WTC11 (cell line): ENCODE measurements at regions of chr14 and their contacts with region 1.

Region 1: GRCh38 chr14:91177073-91178034 is 63.5 kb downstream of the DGLUCY start:
- DNase-seq: peak; percentile 41
- ATAC-seq: peak; percentile 61
- H3K4me3 Mint-ChIP-seq: no peak overlapping the region
- H3K27ac Mint-ChIP-seq: no peak overlapping the region; the same call in 1 of the 2 replicates
- H3K4me1 Mint-ChIP-seq: no peaks in the 10 kb centered on the region
- H3K27me3 Mint-ChIP-seq: no peaks in the 10 kb centered on the region
- CTCF ChIP-seq: peak; percentile 75

Region 2: GRCh38 chr14:91060351-91061055 is 116.9 kb before region 1 on chr14 and contains the start of gene RPS6KA5:
- CTCF ChIA-PET with region 1: interaction called, 20 read pairs
- POLR2A ChIA-PET with region 1: no interaction called
- DNase-seq: peak; percentile 100
- ATAC-seq: peak; percentile 91
- H3K4me3 Mint-ChIP-seq: peak within 1 kb of the TSS; percentile 76
- H3K27ac Mint-ChIP-seq: no peak within 1 kb of the TSS
- H3K4me1 Mint-ChIP-seq: 0 out of 2 replicates have a peak, but pooled peaks cover 2% of the 10 kb centered on the region
- H3K27me3 Mint-ChIP-seq: peaks cover 2% of the 10 kb centered on the region
- CTCF ChIP-seq: no peak
- total RNA-seq, gene RPS6KA5: 3.7 to 5.3 TPM (median 5.2 TPM) in 3 replicates

Region 3: GRCh38 chr14:91154851-91155625 is 22.3 kb before region 1 on chr14:
- CTCF ChIA-PET with region 1: interaction called, 12 read pairs
- POLR2A ChIA-PET with region 1: no interaction called
- DNase-seq: no peak
- ATAC-seq: no peak
- H3K4me3 Mint-ChIP-seq: no peak overlapping the region
- H3K27ac Mint-ChIP-seq: no peak overlapping the region
- H3K4me1 Mint-ChIP-seq: no peaks in the 10 kb centered on the region
- H3K27me3 Mint-ChIP-seq: no peaks in the 10 kb centered on the region
- CTCF ChIP-seq: no peak

Region 4: DNA sequence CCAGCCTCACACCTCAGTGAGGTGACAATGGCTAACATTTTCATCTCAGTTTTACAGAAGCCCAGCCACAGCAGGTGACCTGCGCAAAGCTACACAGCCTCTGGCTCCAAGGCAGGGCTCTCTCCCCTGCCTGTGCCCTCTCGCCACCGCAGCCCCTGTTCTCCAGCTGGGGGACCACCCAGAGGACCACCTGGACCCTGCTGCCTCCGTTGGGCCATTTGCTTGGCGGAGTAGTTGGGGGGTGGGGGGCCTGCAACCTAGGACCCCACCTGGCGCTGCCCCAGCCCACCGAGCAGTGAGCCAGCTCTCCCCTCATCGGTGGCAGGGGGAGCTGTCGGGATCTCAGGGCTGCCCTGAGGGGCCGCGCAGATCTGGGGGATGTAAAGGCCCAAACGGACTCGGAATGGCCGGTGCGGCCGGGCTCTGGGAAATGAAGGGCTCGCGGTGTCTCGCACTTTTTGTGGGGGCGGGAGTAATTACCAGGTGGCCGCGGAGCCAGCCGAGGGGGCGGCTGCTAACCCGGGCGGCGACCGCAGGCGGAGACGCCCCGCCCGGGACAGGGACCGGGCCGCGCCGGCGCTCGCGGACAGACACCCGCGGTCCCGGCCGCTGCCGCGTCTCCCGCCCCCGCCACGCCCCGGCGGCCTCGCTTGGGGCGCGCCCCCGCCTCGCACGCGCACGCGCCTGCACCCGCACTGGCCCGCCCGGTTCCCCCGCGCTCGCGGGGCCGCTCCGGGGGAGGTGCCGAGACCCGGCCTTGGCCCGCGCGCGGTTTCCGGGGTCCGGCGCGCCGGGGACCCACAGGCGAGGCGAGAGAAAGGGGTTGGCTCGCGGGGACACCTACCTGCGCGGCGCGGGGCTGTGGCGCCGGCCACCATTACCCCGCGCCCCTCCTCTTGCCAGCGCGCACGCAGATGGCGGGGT is 75.8 kb after region 1 on chr14:
- CTCF ChIA-PET with region 1: interaction called, 14 read pairs
- POLR2A ChIA-PET with region 1: no interaction called
- DNase-seq: peak; percentile 72
- ATAC-seq: peak; percentile 77
- H3K4me3 Mint-ChIP-seq: peak overlapping the region; percentile 71
- H3K27ac Mint-ChIP-seq: no peak overlapping the region
- H3K4me1 Mint-ChIP-seq: peaks cover 21% of the 10 kb centered on the region
- H3K27me3 Mint-ChIP-seq: peaks cover 33% of the 10 kb centered on the region
- CTCF ChIP-seq: no peak

Region 5: DNA sequence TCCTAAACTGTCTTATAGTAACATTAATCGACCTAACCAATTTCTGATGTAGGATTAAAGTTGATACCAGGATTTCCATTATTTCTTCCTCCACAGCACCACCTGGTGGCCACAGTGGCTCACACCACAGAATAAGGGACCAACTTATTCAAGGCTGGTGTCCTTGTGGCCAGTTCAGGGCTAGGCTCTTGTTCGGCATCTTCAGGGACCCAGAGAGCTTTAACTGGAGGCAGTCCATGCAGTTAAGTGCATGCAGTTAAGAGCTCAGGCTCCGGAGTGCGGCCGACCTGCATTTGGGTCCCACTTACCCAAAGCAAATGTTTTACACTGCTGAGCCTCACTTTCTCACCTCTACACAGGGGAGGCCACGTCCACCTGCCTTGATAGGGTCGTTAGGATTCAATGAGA is 109.2 kb after region 1 on chr14:
- CTCF ChIA-PET with region 1: interaction called, 62 read pairs
- POLR2A ChIA-PET with region 1: interaction called, 3 read pairs
- DNase-seq: peak; percentile 83
- ATAC-seq: peak; percentile 100
- H3K4me3 Mint-ChIP-seq: no peak overlapping the region
- H3K27ac Mint-ChIP-seq: no peak overlapping the region
- H3K4me1 Mint-ChIP-seq: no peaks in the 10 kb centered on the region
- H3K27me3 Mint-ChIP-seq: no peaks in the 10 kb centered on the region
- CTCF ChIP-seq: peak; percentile 73